ENCODE measurements at regions of chr3 and their contacts with region 1.

Region 1: DNA sequence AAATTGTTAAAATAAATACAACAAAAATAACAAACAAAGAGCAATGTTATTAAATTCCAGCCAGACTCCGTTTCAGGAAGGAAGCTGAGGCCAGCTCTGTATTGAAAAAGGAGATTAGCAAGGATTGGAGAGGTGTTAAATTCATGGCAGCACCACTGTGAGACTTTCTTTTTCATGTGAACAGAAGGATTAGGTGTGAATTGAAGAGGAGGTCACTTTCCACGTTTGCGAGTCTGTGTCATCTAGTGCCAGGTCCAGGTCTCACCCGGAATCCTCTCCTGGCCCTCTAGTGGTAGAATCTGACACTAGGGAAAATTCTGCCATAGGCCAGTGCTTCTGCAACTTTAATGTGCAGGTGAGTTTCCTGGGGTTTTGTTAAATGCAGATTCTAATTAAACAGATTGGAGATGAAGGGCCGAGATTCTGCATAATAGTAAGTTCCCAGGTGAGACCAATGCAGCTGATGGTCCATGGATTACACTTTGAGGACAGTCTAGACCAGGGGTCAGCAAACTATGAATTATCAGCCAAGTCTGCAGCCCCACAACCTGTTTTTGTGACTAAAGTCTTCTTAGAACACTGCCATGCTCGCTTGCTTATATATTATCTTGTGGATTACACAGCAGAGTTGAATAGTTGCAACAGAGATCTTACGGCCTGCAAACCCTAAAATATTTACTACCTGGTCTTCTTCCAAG is 9.2 kb upstream of the SLC6A1 start:
- DNase-seq: peak; percentile 12
- ATAC-seq: no peak
- H3K4me3 Mint-ChIP-seq: no peak overlapping the region
- H3K27ac Mint-ChIP-seq: no peak overlapping the region
- H3K4me1 Mint-ChIP-seq: peaks cover 2% of the 10 kb centered on the region
- H3K27me3 Mint-ChIP-seq: peaks cover 15% of the 10 kb centered on the region
- CTCF ChIP-seq: peak; percentile 72

Region 2: GRCh38 chr3:10945683-10946287 is 37.6 kb before region 1 on chr3:
- CTCF ChIA-PET with region 1: interaction called, 19 read pairs
- POLR2A ChIA-PET with region 1: no interaction called
- intact Hi-C with region 1: no loop called
- DNase-seq: peak; percentile 67
- ATAC-seq: peak; percentile 67
- H3K4me3 Mint-ChIP-seq: no peak overlapping the region
- H3K27ac Mint-ChIP-seq: no peak overlapping the region
- H3K4me1 Mint-ChIP-seq: no peaks in the 10 kb centered on the region
- H3K27me3 Mint-ChIP-seq: peaks cover 10% of the 10 kb centered on the region
- CTCF ChIP-seq: peak; percentile 82